Caco-2 (cell line): ENCODE measurements at regions of chr13 and their contacts with region 1.

Region 1: DNA sequence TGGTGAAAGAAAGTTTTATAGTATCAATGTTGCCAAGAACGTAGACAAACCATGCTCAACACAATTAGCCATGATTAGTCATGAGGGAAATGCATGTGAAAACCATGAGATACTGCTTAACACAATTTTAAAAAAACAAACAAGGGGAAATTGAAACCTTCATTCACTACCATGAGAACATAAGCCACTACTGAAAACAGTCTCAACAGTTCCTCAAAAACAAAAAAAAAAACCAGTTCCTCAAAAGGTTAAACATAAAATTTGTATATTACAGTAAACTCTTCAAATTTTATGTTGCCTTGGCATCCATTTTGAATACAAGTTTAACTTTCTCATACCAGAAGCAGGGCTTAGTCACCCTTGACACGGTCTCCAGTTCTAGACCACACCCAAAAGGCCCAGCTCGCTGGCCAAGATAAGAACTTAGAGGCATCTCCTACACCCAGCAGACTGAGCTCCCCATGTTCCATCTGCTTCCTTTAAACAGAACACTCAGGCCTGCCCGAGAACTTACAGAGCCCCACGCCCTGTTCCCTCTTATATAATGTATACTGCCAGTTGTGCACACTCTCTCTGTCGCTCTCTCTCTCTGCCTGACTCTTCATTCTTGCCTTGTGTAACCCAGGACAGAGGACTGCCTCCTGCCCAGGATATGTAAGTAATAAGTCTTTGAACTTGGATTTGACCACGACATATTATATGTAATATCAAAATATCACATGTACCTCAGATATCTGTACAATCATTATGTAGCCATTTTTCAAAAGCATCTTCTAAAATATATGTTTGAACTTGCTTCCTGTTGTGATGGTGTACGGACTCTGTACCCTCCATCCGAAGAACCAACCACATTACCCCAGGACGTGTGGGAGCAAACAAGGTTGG is 67.4 kb downstream of the STK24 start:
- DNase-seq: peak in 1 of 2 experiments; percentile 56
- H3K4me3 ChIP-seq: no peak overlapping the region
- H3K4me3 Mint-ChIP-seq: no peak overlapping the region
- H3K27ac Mint-ChIP-seq: peak overlapping the region; percentile 41
- H3K4me1 ChIP-seq: peaks cover 34% of the 10 kb centered on the region
- H3K4me1 Mint-ChIP-seq: peaks cover 53% of the 10 kb centered on the region
- H3K27me3 ChIP-seq: no peaks in the 10 kb centered on the region
- H3K27me3 Mint-ChIP-seq: no peaks in the 10 kb centered on the region
- CTCF ChIP-seq: no peak

Region 2: GRCh38 chr13:98537306-98537705 is 27.8 kb after region 1 on chr13:
- CTCF ChIA-PET with region 1: no interaction called
- POLR2A ChIA-PET with region 1: interaction called, 12 read pairs
- intact Hi-C with region 1: no loop called
- DNase-seq: no peak
- H3K4me3 ChIP-seq: no peak overlapping the region
- H3K4me3 Mint-ChIP-seq: no peak overlapping the region
- H3K27ac Mint-ChIP-seq: peak overlapping the region; percentile 55
- H3K4me1 ChIP-seq: peaks cover 15% of the 10 kb centered on the region
- H3K4me1 Mint-ChIP-seq: peaks cover 47% of the 10 kb centered on the region
- H3K27me3 ChIP-seq: no peaks in the 10 kb centered on the region
- H3K27me3 Mint-ChIP-seq: no peaks in the 10 kb centered on the region
- CTCF ChIP-seq: no peak

Region 3: GRCh38 chr13:98565726-98566565 is 56.4 kb after region 1 on chr13:
- CTCF ChIA-PET with region 1: no interaction called
- POLR2A ChIA-PET with region 1: interaction called, 13 read pairs
- intact Hi-C with region 1: no loop called
- DNase-seq: no peak
- H3K4me3 ChIP-seq: no peak overlapping the region
- H3K4me3 Mint-ChIP-seq: no peak overlapping the region
- H3K27ac Mint-ChIP-seq: peak overlapping the region; percentile 64
- H3K4me1 ChIP-seq: peaks cover 56% of the 10 kb centered on the region
- H3K4me1 Mint-ChIP-seq: peaks cover 66% of the 10 kb centered on the region
- H3K27me3 ChIP-seq: no peaks in the 10 kb centered on the region
- H3K27me3 Mint-ChIP-seq: no peaks in the 10 kb centered on the region
- CTCF ChIP-seq: no peak

Region 4: DNA sequence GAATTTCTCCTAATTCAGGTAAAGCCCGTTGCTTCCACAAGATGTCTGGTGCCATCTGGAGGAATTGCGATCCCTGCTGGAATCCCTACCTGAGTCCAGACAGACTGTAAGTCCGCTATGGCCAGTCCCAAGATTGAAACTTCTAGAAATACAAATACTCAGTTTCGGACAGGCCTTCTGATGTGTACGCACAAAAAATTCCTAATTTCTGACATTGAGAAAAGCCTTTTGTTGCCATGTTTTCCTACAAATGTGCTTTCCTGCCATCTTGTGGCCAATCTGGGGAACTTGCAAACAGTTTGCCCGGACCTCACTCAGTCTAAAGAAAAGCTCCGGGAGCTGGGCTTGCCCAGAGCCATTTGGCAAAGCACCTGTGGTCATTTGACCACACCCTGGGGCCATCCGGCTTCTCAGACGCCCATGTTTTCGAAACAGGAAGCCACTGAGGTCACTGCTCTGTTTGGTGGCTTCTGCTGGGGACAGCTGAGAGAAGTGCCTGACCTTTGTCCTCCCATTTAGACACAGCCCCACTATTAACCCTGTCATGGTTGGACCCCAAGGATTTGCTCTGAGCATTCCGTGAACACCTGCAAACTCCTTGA is 163.5 kb after region 1 on chr13:
- CTCF ChIA-PET with region 1: interaction called, 12 read pairs
- POLR2A ChIA-PET with region 1: no interaction called
- intact Hi-C with region 1: no loop called
- DNase-seq: peak; percentile 87 to 91
- H3K4me3 ChIP-seq: no peak overlapping the region
- H3K4me3 Mint-ChIP-seq: peak overlapping the region; percentile 14
- H3K27ac Mint-ChIP-seq: peak overlapping the region; percentile 23
- H3K4me1 ChIP-seq: peaks cover 17% of the 10 kb centered on the region
- H3K4me1 Mint-ChIP-seq: peaks cover 8% of the 10 kb centered on the region
- H3K27me3 ChIP-seq: no peaks in the 10 kb centered on the region
- H3K27me3 Mint-ChIP-seq: no peaks in the 10 kb centered on the region
- CTCF ChIP-seq: peak; percentile 88